Natural killer cell (primary cell): ENCODE measurements at regions of chr22 and their contacts with region 1.

Region 1: GRCh38 chr22:39013942-39014722 is at the start of gene APOBEC3C:
- DNase-seq: peak; percentile 66 to 84
- ATAC-seq: peak; percentile 91 to 93 (median 92)
- H3K4me3 ChIP-seq: peak within 1 kb of the TSS; percentile 61
- H3K4me3 Mint-ChIP-seq: peak within 1 kb of the TSS; percentile 97
- H3K27ac ChIP-seq: peak within 1 kb of the TSS; percentile 93
- H3K27ac Mint-ChIP-seq: peak within 1 kb of the TSS; percentile 93 to 96
- H3K4me1 ChIP-seq: peaks cover 40% of the 10 kb centered on the region
- H3K4me1 Mint-ChIP-seq: peaks cover 18 to 48% of the 10 kb centered on the region in 2 donors
- H3K27me3 ChIP-seq: no peaks in the 10 kb centered on the region
- H3K27me3 Mint-ChIP-seq: no peaks in the 10 kb centered on the region
- CTCF ChIP-seq: no peak
- total RNA-seq, gene APOBEC3C: 144 to 168 (median 155) TPM

Region 2: DNA sequence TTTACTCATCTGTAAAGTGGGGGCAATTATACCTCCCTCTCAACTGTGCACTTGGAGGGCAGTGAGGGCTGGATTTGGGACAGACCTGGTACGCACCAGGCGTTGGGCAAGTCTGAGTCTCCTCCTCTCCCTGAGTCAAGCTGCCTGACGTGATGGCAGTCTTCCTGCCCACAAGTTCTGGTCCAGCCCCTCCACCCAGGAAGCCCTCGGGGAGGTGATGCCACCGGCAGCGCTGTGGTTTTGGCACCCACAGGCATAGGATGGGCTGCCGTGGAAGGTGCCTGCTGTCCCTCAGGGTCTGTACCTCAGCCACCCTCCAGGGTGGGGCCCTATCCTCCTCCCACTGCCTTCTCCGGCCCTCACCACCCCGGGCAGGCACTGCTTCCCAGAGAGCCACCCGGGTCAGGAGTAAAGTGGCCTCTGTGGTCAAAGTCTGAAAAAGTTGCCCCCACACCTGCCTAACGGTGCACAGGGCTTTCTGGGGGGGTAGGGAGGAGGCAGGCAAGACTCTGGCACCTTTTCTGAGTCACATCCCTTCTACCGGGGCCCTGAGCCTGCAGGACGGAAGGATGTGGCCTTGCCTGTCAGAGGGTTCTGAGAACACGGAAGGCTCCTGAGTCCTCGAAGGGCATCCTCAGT is 76.4 kb after region 1 on chr22:
- intact Hi-C with region 1: loop called (anchors 2 kb)
- DNase-seq: peak; percentile 90 to 94
- ATAC-seq: peak; percentile 67 to 87 (median 77)
- H3K4me3 ChIP-seq: peak overlapping the region; percentile 22
- H3K4me3 Mint-ChIP-seq: peak overlapping the region; percentile 90
- H3K27ac ChIP-seq: peak overlapping the region; percentile 98
- H3K27ac Mint-ChIP-seq: peak overlapping the region; percentile 98 to 99
- H3K4me1 ChIP-seq: peaks cover 97% of the 10 kb centered on the region
- H3K4me1 Mint-ChIP-seq: peaks cover 82 to 90% of the 10 kb centered on the region in 2 donors
- H3K27me3 ChIP-seq: no peaks in the 10 kb centered on the region
- H3K27me3 Mint-ChIP-seq: no peaks in the 10 kb centered on the region
- CTCF ChIP-seq: no peak

Region 3: DNA sequence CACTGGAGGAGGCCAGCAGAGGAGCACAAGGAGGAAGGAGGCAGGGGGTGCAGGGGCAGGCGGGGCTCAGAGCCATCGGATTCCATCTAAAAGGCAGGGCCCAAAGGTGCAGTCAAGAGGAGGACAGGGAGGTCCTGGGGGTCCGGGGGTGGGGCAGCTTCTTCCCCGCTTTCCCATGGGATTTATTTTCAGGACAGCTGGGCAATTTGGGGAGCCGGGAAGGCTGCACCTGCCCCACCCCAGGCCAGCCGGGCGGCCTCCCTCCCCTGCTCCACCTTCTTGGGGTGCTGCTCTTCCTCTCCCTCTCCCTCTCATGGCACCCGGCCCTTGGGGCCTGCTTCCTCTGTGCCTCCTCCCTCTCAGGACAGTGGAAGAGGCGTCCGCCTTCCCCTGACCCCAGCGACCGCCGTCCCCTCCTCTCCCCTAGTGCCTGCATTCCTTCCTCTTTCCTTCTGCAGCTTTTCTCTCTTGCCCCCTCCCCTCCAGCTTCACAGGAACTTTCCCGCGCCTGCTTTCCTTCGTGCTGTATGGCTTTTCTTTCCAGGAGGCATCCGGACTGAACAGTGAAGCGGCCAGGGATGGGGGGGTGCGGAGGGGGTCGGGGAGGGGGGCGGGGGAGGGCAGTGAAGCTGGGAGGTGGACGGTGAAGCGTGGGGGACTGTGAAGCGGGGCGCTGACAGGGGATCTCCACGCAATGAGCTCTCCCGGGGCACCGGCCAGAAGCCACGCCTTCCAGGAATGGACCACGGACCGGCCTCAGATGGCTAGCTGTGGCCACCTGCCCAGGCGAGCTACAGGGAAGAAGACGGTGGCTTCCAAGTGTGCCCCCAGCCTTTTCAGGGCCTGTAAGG is 109.8 kb after region 1 on chr22:
- intact Hi-C with region 1: loop called (anchors 2 kb)
- DNase-seq: no peak
- ATAC-seq: no peak
- H3K4me3 ChIP-seq: no peak overlapping the region
- H3K4me3 Mint-ChIP-seq: no peak overlapping the region
- H3K27ac ChIP-seq: no peak overlapping the region
- H3K27ac Mint-ChIP-seq: no peak overlapping the region
- H3K4me1 ChIP-seq: peaks cover 3% of the 10 kb centered on the region
- H3K4me1 Mint-ChIP-seq: peaks cover 21 to 24% of the 10 kb centered on the region in 2 donors
- H3K27me3 ChIP-seq: no peaks in the 10 kb centered on the region
- H3K27me3 Mint-ChIP-seq: no peaks in the 10 kb centered on the region
- CTCF ChIP-seq: no peak